CD14-positive monocyte (primary cell): ENCODE measurements at regions of chr2 and their contacts with region 1.

Region 1: GRCh38 chr2:225668606-225669266 is 269.2 kb downstream of the NYAP2 start:
- DNase-seq: peak; percentile 18 to 52 (median 39)
- H3K4me3 ChIP-seq: no peak overlapping the region
- H3K4me3 Mint-ChIP-seq: no peak overlapping the region
- H3K27ac ChIP-seq: no peak overlapping the region
- H3K27ac Mint-ChIP-seq: no peak overlapping the region
- H3K4me1 ChIP-seq: no peaks in the 10 kb centered on the region
- H3K4me1 Mint-ChIP-seq: no peaks in the 10 kb centered on the region
- H3K27me3 ChIP-seq: no peaks in the 10 kb centered on the region
- H3K27me3 Mint-ChIP-seq: peaks cover 2 to 9% (median 3%) of the 10 kb centered on the region in 3 donors
- CTCF ChIP-seq: peak; percentile 80

Region 2: DNA sequence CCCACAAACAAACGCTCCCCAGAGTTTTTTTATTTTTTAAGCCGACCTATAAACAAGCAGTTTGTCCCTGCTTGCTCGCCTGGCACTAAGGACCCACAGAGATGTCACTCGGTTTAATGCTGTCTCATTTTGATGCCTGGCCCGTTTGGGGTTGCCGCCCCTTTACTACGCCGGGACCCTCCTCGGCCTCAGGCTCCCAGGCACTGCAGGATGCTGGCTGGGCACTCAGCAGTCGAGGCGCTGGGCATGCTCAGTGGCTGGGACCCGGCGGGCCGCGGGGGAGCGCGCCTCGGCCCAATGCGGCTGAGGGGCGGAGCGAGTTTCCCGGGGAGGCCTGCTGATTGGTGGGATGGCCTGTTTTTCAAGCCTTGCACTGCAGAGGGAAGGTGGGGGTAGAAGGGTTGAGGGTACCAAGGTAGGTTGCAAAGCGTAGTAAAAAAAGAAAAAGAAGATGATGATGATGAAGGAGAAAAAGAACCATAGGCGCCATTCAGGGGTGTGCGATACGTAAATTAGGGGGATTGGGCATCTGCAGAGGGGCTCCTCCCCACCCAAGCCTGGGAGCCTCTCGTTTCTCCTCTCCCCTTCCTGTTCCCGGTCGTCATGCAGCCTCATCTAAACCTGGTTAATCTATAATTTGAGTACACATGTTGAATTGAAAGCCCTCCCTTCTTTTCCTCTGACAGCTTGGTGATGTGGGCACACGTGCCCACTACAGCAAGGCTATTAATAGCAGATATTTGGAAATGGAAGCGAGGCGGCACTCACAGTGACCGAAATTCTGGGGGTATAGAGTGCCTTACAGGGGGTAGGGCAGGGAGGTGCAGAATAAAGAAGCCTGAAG is 1132.4 kb after region 1 on chr2:
- intact Hi-C with region 1: loop called (anchors 5 to 10 kb)
- DNase-seq: peak in 1 of 3 donors; percentile 17
- H3K4me3 ChIP-seq: peak overlapping the region in 2 of 3 experiments; percentile 11 to 87
- H3K4me3 Mint-ChIP-seq: peak overlapping the region; percentile 80 to 92
- H3K27ac ChIP-seq: no peak overlapping the region
- H3K27ac Mint-ChIP-seq: peak overlapping the region in 1 of 7 donors; percentile 56
- H3K4me1 ChIP-seq: peaks cover 31 to 44% of the 10 kb centered on the region in 2 donors
- H3K4me1 Mint-ChIP-seq: peaks cover 27% of the 10 kb centered on the region
- H3K27me3 ChIP-seq: peaks cover 29 to 73% of the 10 kb centered on the region in 2 donors
- H3K27me3 Mint-ChIP-seq: peaks cover 53 to 86% (median 58%) of the 10 kb centered on the region in 3 donors
- CTCF ChIP-seq: no peak

Region 3: DNA sequence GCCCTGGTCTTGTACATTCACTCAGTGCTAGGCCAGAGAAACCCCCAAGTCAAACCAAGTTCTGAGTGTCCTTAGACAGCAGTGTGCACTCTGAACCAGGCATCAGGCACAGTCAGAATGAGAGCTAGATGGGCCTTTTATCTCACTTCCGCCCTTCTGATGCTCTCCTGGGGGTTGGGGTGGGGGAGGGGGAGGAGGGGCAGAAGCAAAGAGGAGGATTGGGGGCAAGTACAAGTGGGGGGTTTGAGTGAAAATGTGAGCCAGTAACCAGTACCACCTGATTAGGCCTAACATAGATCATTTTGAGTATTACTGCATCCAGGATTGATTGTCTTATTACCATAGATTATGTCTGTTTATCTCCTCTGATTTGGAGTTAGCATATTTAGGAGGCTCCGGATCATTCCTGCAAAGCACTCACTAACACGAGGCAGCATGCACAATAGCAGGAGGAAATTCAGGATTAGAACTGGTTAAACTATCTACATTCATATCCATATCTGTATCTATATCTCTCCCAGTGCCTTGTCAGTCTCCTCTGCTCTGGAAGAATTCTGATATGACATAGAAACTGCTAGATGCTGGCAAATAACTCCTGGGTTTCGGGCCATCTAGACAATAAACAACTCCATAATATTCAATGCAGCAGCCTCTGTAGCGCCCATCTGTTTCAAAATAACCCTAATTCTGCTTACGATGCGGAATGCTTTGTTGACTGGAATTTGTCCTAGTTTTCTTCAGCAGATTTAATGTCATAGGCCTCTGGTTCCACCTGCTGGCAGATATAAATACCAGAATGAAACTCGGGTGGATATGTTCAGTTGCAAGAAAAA is 1316.2 kb after region 1 on chr2:
- intact Hi-C with region 1: loop called (anchors 5 to 10 kb)
- DNase-seq: no peak
- H3K4me3 ChIP-seq: no peak overlapping the region
- H3K4me3 Mint-ChIP-seq: no peak overlapping the region
- H3K27ac ChIP-seq: no peak overlapping the region
- H3K27ac Mint-ChIP-seq: peak overlapping the region in 2 of 7 donors; percentile 26 to 38
- H3K4me1 ChIP-seq: no peaks in the 10 kb centered on the region
- H3K4me1 Mint-ChIP-seq: no peaks in the 10 kb centered on the region
- H3K27me3 ChIP-seq: no peaks in the 10 kb centered on the region
- H3K27me3 Mint-ChIP-seq: peaks cover 0 to 2% (median 0%) of the 10 kb centered on the region in 3 donors
- CTCF ChIP-seq: peak; percentile 55

Region 4: GRCh38 chr2:227106845-227107759 is 1438.4 kb after region 1 on chr2:
- intact Hi-C with region 1: loop called (anchors 10 kb)
- DNase-seq: peak; percentile 8 to 32 (median 26)
- H3K4me3 ChIP-seq: no peak overlapping the region
- H3K4me3 Mint-ChIP-seq: no peak overlapping the region
- H3K27ac ChIP-seq: no peak overlapping the region
- H3K27ac Mint-ChIP-seq: no peak overlapping the region
- H3K4me1 ChIP-seq: no peaks in the 10 kb centered on the region
- H3K4me1 Mint-ChIP-seq: peaks cover 2% of the 10 kb centered on the region
- H3K27me3 ChIP-seq: no peaks in the 10 kb centered on the region
- H3K27me3 Mint-ChIP-seq: peaks cover 0 to 4% (median 3%) of the 10 kb centered on the region in 3 donors
- CTCF ChIP-seq: peak; percentile 59

Region 5: GRCh38 chr2:227238238-227239237 is 1569.8 kb after region 1 on chr2:
- intact Hi-C with region 1: loop called in 1 of 2 experiments (anchors 5 kb)
- DNase-seq: peak; percentile 25 to 44 (median 41)
- H3K4me3 ChIP-seq: no peak overlapping the region
- H3K4me3 Mint-ChIP-seq: peak overlapping the region in 1 of 2 donors; percentile 39
- H3K27ac ChIP-seq: no peak overlapping the region
- H3K27ac Mint-ChIP-seq: no peak overlapping the region
- H3K4me1 ChIP-seq: no peaks in the 10 kb centered on the region
- H3K4me1 Mint-ChIP-seq: no peaks in the 10 kb centered on the region
- H3K27me3 ChIP-seq: no peaks in the 10 kb centered on the region
- H3K27me3 Mint-ChIP-seq: peaks cover 4 to 9% (median 5%) of the 10 kb centered on the region in 3 donors
- CTCF ChIP-seq: peak; percentile 95